IMR-90 (cell line): ENCODE measurements at regions of chr15 and their contacts with region 1.

Region 1: DNA sequence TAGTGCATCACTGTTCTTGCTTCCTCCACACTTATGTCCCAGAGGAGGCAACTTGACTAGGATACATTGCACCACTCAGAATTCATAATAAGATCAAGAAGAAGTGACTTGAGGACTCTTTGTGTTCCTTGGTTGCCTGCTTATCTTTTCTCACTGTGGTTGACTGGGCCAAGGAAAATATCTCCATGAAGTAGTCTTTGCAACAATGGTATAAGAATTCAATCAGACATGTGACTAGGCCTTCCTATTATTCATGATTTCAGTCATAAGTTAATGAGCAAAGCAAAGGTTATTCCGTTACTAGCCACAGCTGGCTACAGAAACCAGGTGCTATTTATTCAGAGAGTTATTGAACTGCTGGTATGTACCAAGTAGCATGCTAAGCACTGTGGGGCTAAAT is 359.3 kb downstream of the RORA start:
- DNase-seq: no peak
- ATAC-seq: no peak
- H3K4me3 ChIP-seq: no peak overlapping the region
- H3K27ac ChIP-seq: no peak overlapping the region
- H3K4me1 ChIP-seq: no peaks in the 10 kb centered on the region; the same call in 1 of the 2 replicates
- H3K27me3 ChIP-seq: peaks cover 15% of the 10 kb centered on the region
- CTCF ChIP-seq: no peak
- POLR2A ChIP-seq: no peak
- RAD21 ChIP-seq: no peak

Region 2: GRCh38 chr15:60682115-60682514 is 187.7 kb before region 1 on chr15:
- CTCF ChIA-PET with region 1: no interaction called
- POLR2A ChIA-PET with region 1: no interaction called
- dilution Hi-C with region 1: no loop called
- in situ Hi-C with region 1: no loop called
- intact Hi-C with region 1: no loop called
- DNase-seq: peak; percentile 78
- ATAC-seq: peak; percentile 84
- H3K4me3 ChIP-seq: no peak overlapping the region
- H3K27ac ChIP-seq: no peak overlapping the region
- H3K4me1 ChIP-seq: peaks cover 4% of the 10 kb centered on the region; the same call in 1 of the 2 replicates
- H3K27me3 ChIP-seq: no peaks in the 10 kb centered on the region
- CTCF ChIP-seq: no peak
- POLR2A ChIP-seq: no peak
- RAD21 ChIP-seq: no peak

Region 3: DNA sequence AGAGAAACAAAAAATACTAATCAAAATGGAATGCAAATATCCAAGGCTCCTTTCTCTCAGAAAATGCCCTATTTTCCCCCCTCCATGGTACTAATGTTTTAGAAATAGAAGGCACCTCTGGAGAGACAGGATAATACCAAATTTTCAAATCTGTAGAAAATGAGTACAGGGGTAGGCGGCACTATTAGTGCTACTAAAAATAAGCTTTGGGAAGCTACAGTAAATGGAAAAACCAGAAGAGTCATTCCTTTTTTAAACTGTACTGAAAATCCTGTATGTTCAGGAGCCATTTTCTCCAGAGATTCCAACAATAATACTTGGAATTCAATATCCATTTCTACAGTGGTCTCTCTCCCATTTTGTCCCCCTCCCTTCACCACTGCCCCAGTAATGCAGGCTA is 38.5 kb after region 1 on chr15:
- CTCF ChIA-PET with region 1: interaction called, 3 read pairs
- POLR2A ChIA-PET with region 1: no interaction called
- dilution Hi-C with region 1: no loop called
- in situ Hi-C with region 1: no loop called
- intact Hi-C with region 1: loop called (anchors 2 kb)
- DNase-seq: no peak
- ATAC-seq: no peak
- H3K4me3 ChIP-seq: no peak overlapping the region
- H3K27ac ChIP-seq: no peak overlapping the region
- H3K4me1 ChIP-seq: no peaks in the 10 kb centered on the region
- H3K27me3 ChIP-seq: peaks cover 31% of the 10 kb centered on the region
- CTCF ChIP-seq: no peak
- POLR2A ChIP-seq: no peak
- RAD21 ChIP-seq: no peak